ENCODE measurements at regions of chr3 and their contacts with region 1.

Region 1: DNA sequence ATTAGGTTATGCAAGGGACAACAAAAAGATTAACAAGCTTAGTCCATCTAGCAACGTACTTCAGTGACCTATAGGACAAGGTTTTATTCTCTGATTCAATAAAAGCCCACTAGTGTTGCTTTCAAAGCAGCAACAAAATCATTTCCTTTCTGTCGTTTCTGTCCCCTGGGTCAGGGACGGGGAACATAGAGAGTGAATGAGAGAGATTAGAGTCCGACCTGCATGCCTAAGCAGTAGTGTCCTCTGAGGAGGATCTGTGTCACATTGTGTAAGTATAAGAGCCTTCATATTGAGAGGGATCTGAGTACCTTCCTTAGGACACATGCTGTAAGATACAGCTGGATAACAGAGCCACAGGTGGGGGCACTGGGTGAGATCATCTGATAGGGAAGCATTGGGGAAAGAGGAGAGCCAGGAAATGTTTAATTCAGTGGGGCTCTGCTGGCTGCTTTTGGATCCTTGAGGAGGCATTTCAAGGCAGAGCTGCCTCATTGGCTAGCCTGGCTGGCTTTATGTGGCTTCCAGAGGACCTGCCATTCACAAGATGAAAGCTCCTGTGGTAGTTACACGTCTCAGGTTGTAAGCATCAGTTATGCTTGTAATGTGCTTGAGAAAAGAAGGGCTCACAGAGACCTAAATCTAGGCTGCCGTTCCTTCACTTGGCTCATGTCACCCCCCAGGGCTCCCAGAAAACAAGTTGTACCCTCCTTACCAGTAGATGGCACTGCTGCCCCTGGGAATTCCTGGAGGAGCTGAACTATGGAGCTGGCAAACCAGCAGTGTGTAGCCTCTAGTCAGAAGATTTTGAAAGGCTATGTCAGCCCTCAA is 2.7 kb downstream of the TMEM108 start:
- DNase-seq: peak; percentile 61 to 82
- H3K4me3 ChIP-seq: no peak overlapping the region
- H3K4me3 Mint-ChIP-seq: no peak overlapping the region
- H3K27ac Mint-ChIP-seq: no peak overlapping the region
- H3K4me1 ChIP-seq: no peaks in the 10 kb centered on the region
- H3K4me1 Mint-ChIP-seq: no peaks in the 10 kb centered on the region
- H3K27me3 ChIP-seq: no peaks in the 10 kb centered on the region
- H3K27me3 Mint-ChIP-seq: peaks cover 10% of the 10 kb centered on the region
- CTCF ChIP-seq: peak; percentile 80 to 83

Region 2: DNA sequence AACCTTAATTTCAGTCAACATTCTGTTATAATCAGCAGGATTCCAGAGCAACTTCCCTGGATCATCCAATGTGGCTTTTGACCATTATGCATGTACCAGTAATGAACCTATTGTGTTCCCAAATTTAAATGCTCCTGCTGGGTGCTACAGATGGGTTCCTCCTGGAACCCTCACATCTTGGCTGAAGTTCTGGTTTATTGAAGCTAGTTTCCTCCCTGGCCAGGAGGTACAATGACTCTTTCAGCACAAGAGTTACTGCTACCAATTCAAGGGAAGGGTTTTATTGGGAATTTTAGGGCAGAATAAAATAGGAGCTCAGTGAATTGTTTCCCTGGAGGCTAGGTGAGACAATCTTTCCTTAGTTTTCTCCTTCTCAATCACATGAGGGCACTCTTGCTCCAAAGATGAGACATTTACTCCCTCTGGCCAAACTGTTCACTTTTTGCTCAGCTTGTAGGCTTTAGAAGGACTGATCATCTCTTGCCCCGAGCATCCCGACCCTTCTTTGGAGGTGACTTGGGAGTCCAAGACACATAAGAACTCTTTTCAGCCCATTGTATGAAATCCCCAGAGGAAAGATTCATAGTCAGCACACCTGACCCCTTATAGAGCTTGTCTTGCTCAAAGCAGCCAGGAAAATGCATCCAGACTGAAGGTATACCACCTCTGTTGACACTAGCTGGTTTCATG is 309.9 kb before region 1 on chr3:
- CTCF ChIA-PET with region 1: interaction called, 4 read pairs
- POLR2A ChIA-PET with region 1: no interaction called
- intact Hi-C with region 1: loop called (anchors 2 kb)
- DNase-seq: peak in 1 of 2 experiments; percentile 47
- H3K4me3 ChIP-seq: no peak overlapping the region
- H3K4me3 Mint-ChIP-seq: no peak overlapping the region
- H3K27ac Mint-ChIP-seq: no peak overlapping the region
- H3K4me1 ChIP-seq: peaks cover 1% of the 10 kb centered on the region; the same call in 1 of the 2 replicates
- H3K4me1 Mint-ChIP-seq: no peaks in the 10 kb centered on the region
- H3K27me3 ChIP-seq: no peaks in the 10 kb centered on the region
- H3K27me3 Mint-ChIP-seq: peaks cover 8% of the 10 kb centered on the region
- CTCF ChIP-seq: peak in 1 of 2 experiments; percentile 44

Region 3: DNA sequence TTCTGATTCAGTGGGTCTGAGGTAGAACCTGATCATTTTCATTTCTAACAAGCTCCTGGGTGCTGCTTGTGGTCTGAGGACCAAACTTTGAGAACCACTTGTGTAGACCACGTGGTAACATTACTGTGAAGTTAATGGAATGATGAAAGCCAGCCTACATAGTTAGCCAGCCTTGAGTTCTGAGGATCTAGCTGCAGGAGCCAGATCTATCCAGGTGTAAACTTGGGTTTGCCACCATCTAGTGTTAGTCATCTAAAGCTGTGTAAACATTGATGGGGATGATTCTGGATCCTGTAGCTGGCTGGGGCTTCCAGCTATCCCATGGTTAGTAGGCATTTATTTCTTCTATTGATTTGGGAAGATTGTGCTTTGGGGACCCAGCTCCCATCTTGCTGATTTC is 167.3 kb after region 1 on chr3:
- CTCF ChIA-PET with region 1: interaction called, 11 read pairs
- POLR2A ChIA-PET with region 1: no interaction called
- intact Hi-C with region 1: loop called (anchors 1 kb)
- DNase-seq: no peak
- H3K4me3 ChIP-seq: no peak overlapping the region
- H3K4me3 Mint-ChIP-seq: no peak overlapping the region
- H3K27ac Mint-ChIP-seq: no peak overlapping the region
- H3K4me1 ChIP-seq: no peaks in the 10 kb centered on the region
- H3K4me1 Mint-ChIP-seq: no peaks in the 10 kb centered on the region
- H3K27me3 ChIP-seq: no peaks in the 10 kb centered on the region
- H3K27me3 Mint-ChIP-seq: peaks cover 20% of the 10 kb centered on the region
- CTCF ChIP-seq: no peak

Region 4: GRCh38 chr3:133271539-133271938 is 230.6 kb after region 1 on chr3:
- CTCF ChIA-PET with region 1: no interaction called
- POLR2A ChIA-PET with region 1: no interaction called
- intact Hi-C with region 1: loop called (anchors 5 kb)
- DNase-seq: no peak
- H3K4me3 ChIP-seq: no peak overlapping the region
- H3K4me3 Mint-ChIP-seq: no peak overlapping the region
- H3K27ac Mint-ChIP-seq: no peak overlapping the region
- H3K4me1 ChIP-seq: no peaks in the 10 kb centered on the region
- H3K4me1 Mint-ChIP-seq: no peaks in the 10 kb centered on the region
- H3K27me3 ChIP-seq: no peaks in the 10 kb centered on the region
- H3K27me3 Mint-ChIP-seq: peaks cover 8% of the 10 kb centered on the region
- CTCF ChIP-seq: no peak

Region 5: GRCh38 chr3:133377396-133377795 is 336.5 kb after region 1 on chr3:
- CTCF ChIA-PET with region 1: interaction called, 21 read pairs
- POLR2A ChIA-PET with region 1: no interaction called
- intact Hi-C with region 1: loop called (anchors 1 kb)
- DNase-seq: peak in 1 of 2 experiments; percentile 38
- H3K4me3 ChIP-seq: no peak overlapping the region
- H3K4me3 Mint-ChIP-seq: no peak overlapping the region
- H3K27ac Mint-ChIP-seq: no peak overlapping the region
- H3K4me1 ChIP-seq: no peaks in the 10 kb centered on the region
- H3K4me1 Mint-ChIP-seq: no peaks in the 10 kb centered on the region
- H3K27me3 ChIP-seq: no peaks in the 10 kb centered on the region
- H3K27me3 Mint-ChIP-seq: peaks cover 4% of the 10 kb centered on the region
- CTCF ChIP-seq: peak; percentile 32 to 34

Region 6: DNA sequence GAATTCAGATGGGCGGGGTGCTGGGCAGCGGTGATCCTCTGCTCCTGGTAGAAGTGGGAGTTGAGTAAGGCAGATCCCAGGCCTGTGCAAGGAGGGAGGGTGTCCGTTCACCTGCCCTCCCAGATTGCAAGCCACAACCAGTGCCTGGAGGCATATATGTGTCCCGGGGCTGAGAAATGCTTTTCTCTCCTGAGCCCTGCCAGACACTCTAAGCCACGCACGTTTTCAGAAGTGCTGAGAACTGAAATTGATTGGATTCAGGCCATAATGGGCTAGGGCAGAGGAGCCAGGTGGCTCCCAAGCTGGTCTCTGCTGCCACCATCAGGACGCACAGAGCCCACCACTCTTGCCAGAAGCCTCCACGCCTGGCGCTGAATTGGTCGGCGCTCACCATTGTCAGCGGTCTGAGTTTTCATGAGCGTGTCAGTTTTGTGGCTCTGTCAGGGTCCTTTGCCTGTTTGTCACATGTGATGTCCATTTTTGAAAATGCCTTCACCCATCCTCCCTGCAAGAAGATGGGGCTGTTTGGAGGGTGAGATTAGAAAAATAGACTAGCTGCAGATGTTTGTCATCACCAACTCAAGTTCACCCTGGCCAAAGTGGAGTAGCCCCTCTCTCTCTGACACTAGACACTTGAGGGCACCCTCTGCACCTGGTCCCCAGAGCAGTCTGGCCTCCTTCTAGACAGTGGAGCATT is 343.6 kb after region 1 on chr3:
- CTCF ChIA-PET with region 1: interaction called, 21 read pairs
- POLR2A ChIA-PET with region 1: no interaction called
- intact Hi-C with region 1: loop called (anchors 1 kb)
- DNase-seq: peak; percentile 56 to 71
- H3K4me3 ChIP-seq: no peak overlapping the region
- H3K4me3 Mint-ChIP-seq: no peak overlapping the region
- H3K27ac Mint-ChIP-seq: no peak overlapping the region
- H3K4me1 ChIP-seq: no peaks in the 10 kb centered on the region
- H3K4me1 Mint-ChIP-seq: no peaks in the 10 kb centered on the region
- H3K27me3 ChIP-seq: no peaks in the 10 kb centered on the region
- H3K27me3 Mint-ChIP-seq: no peaks in the 10 kb centered on the region
- CTCF ChIP-seq: peak; percentile 72 to 88

Region 7: GRCh38 chr3:133426721-133427120 is 385.8 kb after region 1 on chr3:
- CTCF ChIA-PET with region 1: interaction called, 5 read pairs
- POLR2A ChIA-PET with region 1: no interaction called
- intact Hi-C with region 1: loop called (anchors 1 kb)
- DNase-seq: no peak
- H3K4me3 ChIP-seq: no peak overlapping the region
- H3K4me3 Mint-ChIP-seq: no peak overlapping the region
- H3K27ac Mint-ChIP-seq: no peak overlapping the region
- H3K4me1 ChIP-seq: peaks cover 4% of the 10 kb centered on the region; the same call in 1 of the 2 replicates
- H3K4me1 Mint-ChIP-seq: no peaks in the 10 kb centered on the region
- H3K27me3 ChIP-seq: no peaks in the 10 kb centered on the region
- H3K27me3 Mint-ChIP-seq: no peaks in the 10 kb centered on the region
- CTCF ChIP-seq: no peak

Measured in Caco-2 (cell line).